ENCODE measurements at regions of chr5 and their contacts with region 1.

Region 1: DNA sequence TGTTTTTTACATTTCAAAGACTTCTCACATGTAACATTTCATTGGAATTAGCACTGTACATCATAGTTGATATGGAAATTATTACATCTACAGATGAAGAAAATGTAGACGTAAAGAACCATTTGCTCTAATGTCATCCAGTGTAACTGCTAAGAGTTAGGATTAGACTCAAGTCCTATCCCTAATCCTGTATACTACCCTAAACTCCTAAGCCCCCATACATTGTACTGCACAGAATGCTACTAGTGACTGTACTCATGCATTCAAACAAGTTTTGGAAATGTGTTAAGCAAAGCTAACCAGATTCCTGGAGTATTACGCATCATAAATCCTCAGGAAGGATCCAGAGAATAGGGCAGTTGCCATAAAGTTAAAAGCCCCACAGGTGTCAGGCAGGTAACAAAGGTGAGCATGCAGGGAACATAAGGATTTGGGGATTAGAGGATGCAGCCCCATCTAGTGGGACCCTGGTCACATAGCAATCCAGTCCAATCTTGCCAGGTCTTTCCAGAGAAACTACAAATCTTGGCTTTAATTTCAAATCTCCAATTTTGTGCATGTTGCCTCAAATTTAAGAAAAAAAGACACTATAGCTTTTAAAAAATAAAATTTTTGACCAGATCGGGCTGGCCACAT is 32.0 kb downstream of the HAVCR1 start:
- DNase-seq: peak; percentile 63
- H3K4me3 Mint-ChIP-seq: no peak overlapping the region
- H3K27ac Mint-ChIP-seq: no peak overlapping the region
- H3K4me1 Mint-ChIP-seq: no peaks in the 10 kb centered on the region
- H3K27me3 Mint-ChIP-seq: peaks cover 47% of the 10 kb centered on the region
- CTCF ChIP-seq: peak; percentile 67

Region 2: GRCh38 chr5:156824800-156825199 is 202.1 kb before region 1 on chr5:
- CTCF ChIA-PET with region 1: interaction called, 3 read pairs
- POLR2A ChIA-PET with region 1: no interaction called
- intact Hi-C with region 1: loop called (anchors 2 kb)
- DNase-seq: peak; percentile 8
- H3K4me3 Mint-ChIP-seq: no peak overlapping the region
- H3K27ac Mint-ChIP-seq: no peak overlapping the region
- H3K4me1 Mint-ChIP-seq: peaks cover 4% of the 10 kb centered on the region
- H3K27me3 Mint-ChIP-seq: no peaks in the 10 kb centered on the region
- CTCF ChIP-seq: peak; percentile 84

Region 3: DNA sequence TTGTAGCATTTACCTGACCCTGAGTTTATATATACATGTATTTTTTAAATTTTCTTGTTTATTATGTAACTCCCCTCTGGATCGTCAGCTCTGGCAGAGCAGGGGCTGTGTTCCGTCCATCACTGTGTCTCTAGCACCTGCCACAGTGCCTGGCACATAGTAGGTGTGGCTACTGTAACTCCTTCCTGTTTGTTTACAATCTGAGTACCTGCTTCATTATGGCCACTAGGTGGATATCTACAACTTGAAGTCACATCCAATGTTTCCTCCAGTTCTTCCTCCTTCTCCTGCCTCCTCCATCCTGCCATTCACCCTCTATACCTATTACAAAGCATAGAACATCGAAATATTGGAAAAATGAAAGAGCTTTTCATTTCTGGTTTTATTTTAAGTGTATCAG is 191.0 kb before region 1 on chr5:
- CTCF ChIA-PET with region 1: interaction called, 4 read pairs
- POLR2A ChIA-PET with region 1: no interaction called
- intact Hi-C with region 1: loop called (anchors 1 kb)
- DNase-seq: no peak
- H3K4me3 Mint-ChIP-seq: no peak overlapping the region
- H3K27ac Mint-ChIP-seq: no peak overlapping the region
- H3K4me1 Mint-ChIP-seq: peaks cover 4% of the 10 kb centered on the region
- H3K27me3 Mint-ChIP-seq: no peaks in the 10 kb centered on the region
- CTCF ChIP-seq: peak; percentile 43

Region 4: DNA sequence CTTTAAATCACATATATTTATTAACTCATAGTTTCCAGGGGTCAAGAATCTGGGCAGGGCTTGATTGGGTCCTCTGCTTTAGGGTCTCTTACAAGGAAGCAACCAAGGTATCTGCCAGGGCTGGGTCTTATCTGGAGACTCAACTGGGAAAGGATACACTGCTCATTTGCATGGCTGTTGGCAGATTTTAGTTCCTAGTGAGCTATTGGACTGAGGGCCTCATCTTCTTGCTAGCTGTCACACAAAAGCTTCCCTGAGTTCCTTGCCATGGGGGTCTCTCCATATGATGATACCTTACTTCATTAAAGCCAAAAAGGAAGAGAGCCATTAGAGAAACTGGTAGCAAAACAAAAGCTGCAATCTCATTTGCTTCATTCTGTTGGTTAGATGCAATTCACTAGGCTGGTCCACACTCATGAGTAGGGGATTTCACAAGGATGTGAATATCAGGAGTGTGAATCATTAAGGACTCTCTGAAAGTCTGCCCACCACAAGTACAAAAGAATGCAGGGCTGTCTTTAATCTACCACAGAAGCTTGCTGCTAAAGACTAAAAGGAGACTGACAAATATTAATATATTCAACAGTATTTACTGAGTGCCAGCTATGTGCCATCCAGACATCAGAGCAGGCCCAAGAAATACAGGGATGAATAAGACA is 21.9 kb before region 1 on chr5:
- CTCF ChIA-PET with region 1: interaction called, 12 read pairs
- POLR2A ChIA-PET with region 1: no interaction called
- intact Hi-C with region 1: no loop called
- DNase-seq: no peak
- H3K4me3 Mint-ChIP-seq: no peak overlapping the region
- H3K27ac Mint-ChIP-seq: no peak overlapping the region
- H3K4me1 Mint-ChIP-seq: no peaks in the 10 kb centered on the region
- H3K27me3 Mint-ChIP-seq: no peaks in the 10 kb centered on the region
- CTCF ChIP-seq: no peak

Region 5: GRCh38 chr5:157076558-157076957 is 49.7 kb after region 1 on chr5:
- CTCF ChIA-PET with region 1: interaction called, 10 read pairs
- POLR2A ChIA-PET with region 1: no interaction called
- intact Hi-C with region 1: no loop called
- DNase-seq: peak; percentile 77
- H3K4me3 Mint-ChIP-seq: no peak overlapping the region
- H3K27ac Mint-ChIP-seq: no peak overlapping the region
- H3K4me1 Mint-ChIP-seq: peaks cover 16% of the 10 kb centered on the region
- H3K27me3 Mint-ChIP-seq: no peaks in the 10 kb centered on the region
- CTCF ChIP-seq: no peak

Measured in MCF 10A (cell line).